Activated CD4-positive, alpha-beta T cell treated with anti-CD3 and anti-CD28 coated beads for 36 hours (primary cell): ENCODE measurements at regions of chr6 and their contacts with region 1.

Region 1: DNA sequence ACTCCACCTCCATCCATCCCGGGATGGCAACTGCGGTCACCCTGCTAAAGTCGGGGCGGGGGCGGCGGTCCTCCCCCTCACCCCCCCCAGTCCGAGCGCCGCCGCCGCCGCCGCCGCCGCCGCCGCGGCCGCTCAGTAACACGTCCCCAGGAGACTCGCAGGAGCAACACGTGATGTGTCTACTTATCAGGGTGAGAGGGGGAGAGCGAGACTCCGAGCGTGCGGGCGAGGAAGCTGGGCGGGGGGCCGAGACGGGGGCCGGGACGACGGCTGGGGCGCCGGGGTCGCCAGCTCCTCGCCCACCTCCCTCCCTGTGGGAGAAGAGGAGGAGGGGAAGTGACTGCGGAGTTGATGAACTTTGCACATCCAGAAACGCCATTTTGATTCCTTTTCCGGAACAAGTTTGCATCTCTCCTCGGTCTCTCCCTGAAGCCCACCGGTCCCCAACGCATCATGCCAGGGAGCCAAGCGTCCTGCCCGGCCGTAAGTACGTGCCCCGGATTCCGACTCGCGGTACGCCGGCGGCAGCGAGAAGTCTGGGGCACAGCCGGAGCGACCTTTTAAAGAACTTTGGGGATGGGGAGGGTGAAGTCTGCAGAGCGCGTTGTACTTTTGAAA is at the start of gene RREB1:
- DNase-seq: peak; percentile 77
- ATAC-seq: peak; percentile 54
- H3K4me3 Mint-ChIP-seq: peak within 1 kb of the TSS; percentile 94
- H3K27ac Mint-ChIP-seq: peak within 1 kb of the TSS; percentile 93
- H3K4me1 Mint-ChIP-seq: peaks cover 40% of the 10 kb centered on the region
- H3K27me3 Mint-ChIP-seq: no peaks in the 10 kb centered on the region
- total RNA-seq, gene RREB1: 14.7 to 18.1 TPM

Region 2: GRCh38 chr6:5260661-5261544 is 1846.8 kb before region 1 on chr6 and contains the starts of genes FARS2 and LYRM4:
- CTCF ChIA-PET with region 1: no interaction called
- POLR2A ChIA-PET with region 1: no interaction called
- intact Hi-C with region 1: loop called in 1 of 2 experiments (anchors 1 kb)
- DNase-seq: peak; percentile 94
- ATAC-seq: peak; percentile 80
- H3K4me3 Mint-ChIP-seq: peak within 1 kb of the TSS; percentile 92
- H3K27ac Mint-ChIP-seq: peak within 1 kb of the TSS; percentile 97
- H3K4me1 Mint-ChIP-seq: peaks cover 36% of the 10 kb centered on the region
- H3K27me3 Mint-ChIP-seq: no peaks in the 10 kb centered on the region
- total RNA-seq, gene FARS2: 17.6 to 18.4 TPM
- total RNA-seq, gene LYRM4: 46.4 to 53.4 TPM

Region 3: GRCh38 chr6:6516666-6517458 is 590.8 kb before region 1 on chr6:
- CTCF ChIA-PET with region 1: no interaction called
- POLR2A ChIA-PET with region 1: no interaction called
- intact Hi-C with region 1: no loop called
- DNase-seq: peak; percentile 20
- ATAC-seq: no peak
- H3K4me3 Mint-ChIP-seq: no peak overlapping the region
- H3K27ac Mint-ChIP-seq: no peak overlapping the region
- H3K4me1 Mint-ChIP-seq: peaks cover 18% of the 10 kb centered on the region
- H3K27me3 Mint-ChIP-seq: peaks cover 77% of the 10 kb centered on the region

Region 4: GRCh38 chr6:7073821-7074525 is 33.7 kb before region 1 on chr6:
- CTCF ChIA-PET with region 1: interaction called, 5 read pairs
- POLR2A ChIA-PET with region 1: no interaction called
- intact Hi-C with region 1: loop called (anchors 1 to 5 kb)
- DNase-seq: peak; percentile 87
- ATAC-seq: peak; percentile 99
- H3K4me3 Mint-ChIP-seq: no peak overlapping the region
- H3K27ac Mint-ChIP-seq: no peak overlapping the region
- H3K4me1 Mint-ChIP-seq: peaks cover 12% of the 10 kb centered on the region
- H3K27me3 Mint-ChIP-seq: peaks cover 26% of the 10 kb centered on the region

Region 5: DNA sequence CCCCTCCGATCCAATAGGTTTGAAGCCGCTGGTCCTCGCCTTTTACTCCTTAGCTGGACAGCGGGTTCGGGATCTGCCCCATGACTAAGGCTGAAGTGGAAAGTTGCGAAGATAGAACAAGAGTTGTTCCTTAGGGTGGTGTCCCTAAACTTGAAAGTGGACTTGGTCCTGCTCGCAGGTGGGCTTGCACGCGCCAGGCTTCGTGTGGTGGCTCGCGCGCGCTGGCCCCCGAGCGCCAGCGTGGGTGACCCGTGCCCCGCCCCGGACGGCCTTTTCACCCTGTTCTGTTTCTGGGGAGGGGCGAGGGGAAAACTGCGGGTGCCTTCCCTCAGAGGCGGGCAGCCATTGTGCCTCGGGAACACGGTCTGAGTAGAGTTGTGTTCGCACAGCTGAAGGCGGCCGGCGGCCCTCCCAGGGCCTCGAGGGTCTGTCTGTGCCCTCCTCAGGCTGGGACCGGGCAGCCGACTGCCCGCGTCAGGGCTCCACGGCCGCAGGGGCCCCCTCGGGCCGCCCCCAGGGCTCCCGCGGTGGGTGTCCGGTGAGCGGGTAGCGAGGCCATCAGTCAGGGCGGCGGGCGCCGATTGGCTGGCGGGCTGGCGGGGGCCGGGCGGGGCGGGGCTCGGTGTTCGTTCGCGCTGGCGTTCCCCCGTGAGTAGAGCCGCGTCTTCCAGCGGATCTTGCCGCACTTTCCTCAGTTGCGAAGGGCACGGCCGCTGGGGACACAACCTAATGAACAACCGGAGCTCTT is 33.1 kb after region 1 on chr6:
- CTCF ChIA-PET with region 1: interaction called, 5 read pairs
- POLR2A ChIA-PET with region 1: interaction called, 8 read pairs
- intact Hi-C with region 1: loop called (anchors 1 to 2 kb)
- DNase-seq: peak; percentile 91
- ATAC-seq: peak; percentile 72
- H3K4me3 Mint-ChIP-seq: peak overlapping the region; percentile 72
- H3K27ac Mint-ChIP-seq: peak overlapping the region; percentile 85
- H3K4me1 Mint-ChIP-seq: peaks cover 82% of the 10 kb centered on the region
- H3K27me3 Mint-ChIP-seq: no peaks in the 10 kb centered on the region

Region 6: DNA sequence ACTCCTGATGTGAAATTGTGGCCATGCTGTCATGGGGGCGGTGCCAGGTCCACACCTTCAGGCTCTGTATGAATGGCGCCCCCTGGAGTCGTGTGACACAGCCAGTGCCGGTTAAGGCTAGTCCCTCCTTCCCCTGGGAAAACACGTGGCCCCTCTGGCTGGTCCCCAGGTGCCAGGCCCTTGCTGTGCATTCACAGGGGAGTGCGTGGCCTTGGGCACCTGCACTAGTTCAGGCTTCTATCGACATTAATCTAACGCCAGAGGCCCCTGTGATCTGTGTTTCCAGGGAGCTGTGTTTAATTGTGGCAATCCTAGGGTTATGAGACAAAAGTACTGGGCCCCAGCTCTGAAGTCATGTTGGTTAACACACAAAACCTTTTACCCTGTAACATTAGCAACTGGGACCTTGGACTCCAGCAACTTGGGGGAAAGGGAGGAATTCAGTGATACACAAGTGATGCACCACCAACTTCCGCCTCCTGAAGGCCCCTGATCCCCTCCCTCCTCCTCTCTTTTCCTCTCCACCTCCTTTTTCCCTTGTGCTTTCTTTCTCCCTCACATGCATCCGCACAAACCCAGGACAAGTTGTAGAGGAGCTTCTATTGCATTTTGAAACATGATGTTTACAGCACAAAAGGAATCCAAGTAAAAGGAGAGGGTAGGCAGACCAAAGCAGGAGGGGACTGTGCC is 131.4 kb after region 1 on chr6:
- CTCF ChIA-PET with region 1: interaction called, 7 read pairs
- POLR2A ChIA-PET with region 1: no interaction called
- intact Hi-C with region 1: loop called in 1 of 2 experiments (anchors 2 kb)
- DNase-seq: peak; percentile 92
- ATAC-seq: peak; percentile 92
- H3K4me3 Mint-ChIP-seq: no peak overlapping the region
- H3K27ac Mint-ChIP-seq: no peak overlapping the region
- H3K4me1 Mint-ChIP-seq: peaks cover 23% of the 10 kb centered on the region
- H3K27me3 Mint-ChIP-seq: no peaks in the 10 kb centered on the region

Region 7: DNA sequence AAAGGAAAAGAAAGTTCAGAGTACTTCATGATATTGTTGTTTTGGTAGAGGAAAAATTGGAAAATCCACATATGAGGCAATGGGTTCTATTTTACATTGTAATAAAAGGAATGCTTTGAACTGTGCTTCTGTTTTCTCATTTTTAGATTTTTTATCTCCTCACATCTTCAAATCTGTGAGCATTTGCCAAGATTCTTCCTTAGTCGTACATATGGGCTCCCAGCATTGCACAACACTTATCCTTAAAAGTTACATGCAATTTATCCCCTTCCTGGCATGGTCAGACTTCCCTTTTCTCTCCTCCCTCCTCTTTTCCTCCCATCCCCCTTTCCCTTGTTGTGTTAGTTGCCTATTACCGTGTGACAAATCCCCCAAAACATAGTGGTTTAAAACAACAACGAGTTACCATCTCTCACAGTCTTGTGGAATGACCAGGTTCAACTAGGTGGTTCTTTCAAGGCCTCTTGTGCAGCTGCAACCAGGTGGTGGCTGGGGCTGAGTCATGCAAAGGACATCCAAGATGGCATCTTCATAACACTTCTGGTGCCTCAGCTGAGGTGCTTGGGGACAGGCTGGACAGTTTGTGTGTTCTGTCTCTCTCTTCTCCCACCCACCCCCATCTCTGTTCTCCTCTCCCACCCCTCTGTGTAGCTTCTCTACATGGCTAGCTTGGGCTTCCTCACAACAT is 734.2 kb after region 1 on chr6:
- CTCF ChIA-PET with region 1: no interaction called
- POLR2A ChIA-PET with region 1: no interaction called
- intact Hi-C with region 1: no loop called
- DNase-seq: no peak
- ATAC-seq: no peak
- H3K4me3 Mint-ChIP-seq: no peak overlapping the region
- H3K27ac Mint-ChIP-seq: no peak overlapping the region
- H3K4me1 Mint-ChIP-seq: no peaks in the 10 kb centered on the region
- H3K27me3 Mint-ChIP-seq: peaks cover 4% of the 10 kb centered on the region

Region 8: GRCh38 chr6:8102122-8102958 is 994.7 kb after region 1 on chr6 and contains the start of gene EEF1E1:
- CTCF ChIA-PET with region 1: no interaction called
- POLR2A ChIA-PET with region 1: no interaction called
- intact Hi-C with region 1: loop called in 1 of 2 experiments (anchors 5 kb)
- DNase-seq: peak; percentile 99
- ATAC-seq: peak; percentile 98
- H3K4me3 Mint-ChIP-seq: peak within 1 kb of the TSS; percentile 88
- H3K27ac Mint-ChIP-seq: peak within 1 kb of the TSS; percentile 96
- H3K4me1 Mint-ChIP-seq: peaks cover 24% of the 10 kb centered on the region
- H3K27me3 Mint-ChIP-seq: peaks cover 15% of the 10 kb centered on the region
- total RNA-seq, gene EEF1E1: 73.4 to 74.6 TPM